Ovary (tissue), 10 donors: ENCODE measurements at regions of chr19 and their contacts with region 1.

Region 1: GRCh38 chr19:47514869-47515588 is at the start of gene NAPA:
- DNase-seq: peak; percentile 100
- H3K4me3 ChIP-seq: peak within 1 kb of the TSS; percentile 78
- H3K27ac ChIP-seq: peak within 1 kb of the TSS; percentile 85 to 97
- H3K4me1 ChIP-seq: peaks cover 34% of the 10 kb centered on the region
- H3K27me3 ChIP-seq: no peaks in the 10 kb centered on the region
- CTCF ChIP-seq: peak in 2 of 3 donors; percentile 23 to 98
- EP300 ChIP-seq: peak; percentile 92
- POLR2A ChIP-seq: peak; percentile 95
- total RNA-seq, gene NAPA: 76.5 to 101 (median 95.1) TPM

Region 2: DNA sequence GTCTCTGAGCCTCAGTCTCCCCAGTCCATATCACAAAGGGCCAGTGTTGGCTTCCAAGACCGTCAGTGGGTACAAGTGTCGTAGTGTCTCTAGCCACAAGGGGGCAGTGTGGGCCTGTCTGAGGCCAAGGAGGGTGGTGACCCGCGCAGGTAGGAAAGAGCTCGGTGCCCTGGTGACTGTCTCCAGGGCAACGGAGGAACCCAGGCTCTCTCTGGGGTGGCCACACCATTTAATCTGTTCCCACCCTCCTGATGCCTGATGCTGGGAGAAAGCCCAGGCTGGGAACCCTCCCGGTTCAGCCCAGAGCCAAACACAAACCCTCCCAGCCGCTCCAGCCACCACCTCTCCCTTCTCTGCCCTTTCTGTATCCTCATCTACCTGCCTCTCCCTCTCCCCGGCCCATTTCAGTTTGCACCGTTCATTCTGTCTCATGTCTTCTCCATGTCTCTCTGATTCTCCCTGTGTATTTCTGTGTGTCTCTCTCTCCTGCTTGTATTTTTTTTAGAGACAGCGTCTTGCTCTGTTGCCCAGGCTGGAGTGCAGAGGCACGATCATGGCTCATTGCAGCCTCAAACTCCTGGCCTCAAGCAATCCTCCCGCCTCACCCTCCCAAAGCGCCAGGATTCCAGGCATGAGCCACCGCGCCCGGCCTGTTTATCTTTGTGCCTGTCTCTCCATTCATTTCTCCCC is 78.2 kb before region 1 on chr19:
- intact Hi-C with region 1: loop called in 2 of 4 experiments (anchors 5 to 10 kb)
- DNase-seq: peak; percentile 52 to 75 (median 71)
- H3K4me3 ChIP-seq: no peak overlapping the region
- H3K27ac ChIP-seq: no peak overlapping the region
- H3K4me1 ChIP-seq: no peaks in the 10 kb centered on the region
- H3K27me3 ChIP-seq: no peaks in the 10 kb centered on the region
- CTCF ChIP-seq: peak; percentile 47 to 73 (median 68)
- EP300 ChIP-seq: no peak
- POLR2A ChIP-seq: no peak

Region 3: DNA sequence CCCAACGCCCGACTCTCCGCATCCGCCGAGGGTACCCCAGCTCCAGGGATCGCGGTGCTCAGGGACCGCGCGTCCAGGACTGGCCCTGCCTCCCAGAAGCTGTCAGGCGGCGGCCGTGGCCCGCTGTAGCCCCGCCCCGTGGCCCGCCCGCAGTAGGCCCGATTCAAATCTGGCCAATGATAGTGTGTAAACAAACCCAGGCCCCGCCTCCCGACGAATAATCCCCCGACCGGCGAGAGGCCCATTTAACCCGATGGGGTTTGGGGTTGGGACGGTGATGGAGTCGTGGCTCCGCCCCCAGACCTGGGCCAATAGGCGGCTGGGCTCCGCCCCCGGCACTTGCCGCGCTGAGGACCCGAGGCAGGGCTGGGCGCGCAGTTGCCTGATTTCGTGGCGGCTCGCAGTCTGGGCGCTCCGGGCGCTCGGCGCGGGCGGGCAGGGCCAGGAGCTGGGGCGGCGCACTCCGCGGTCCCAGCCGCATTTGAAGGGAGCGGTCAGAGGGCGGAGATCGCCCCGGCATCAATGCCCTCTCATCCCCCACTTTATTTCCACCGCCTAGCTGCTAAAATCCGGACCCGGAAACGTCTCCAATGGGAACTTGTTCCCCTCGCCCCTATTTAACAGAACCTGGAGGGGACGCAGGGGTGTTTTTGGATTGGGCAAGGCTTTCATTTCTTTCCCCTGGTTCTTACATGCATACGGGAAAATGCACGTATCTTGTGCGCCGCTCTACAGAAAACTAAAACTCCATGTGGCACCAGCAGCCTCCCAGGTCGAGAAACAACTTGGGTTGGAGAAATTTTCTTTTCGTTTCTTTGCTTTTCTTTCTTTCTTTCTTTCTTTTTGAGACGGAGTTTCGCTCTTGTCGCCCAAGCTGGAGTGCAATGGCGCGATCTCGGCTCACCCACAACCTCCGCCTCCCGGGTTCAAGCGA is 85.5 kb after region 1 on chr19:
- intact Hi-C with region 1: loop called in 2 of 4 experiments (anchors 10 kb)
- DNase-seq: peak; percentile 99 to 100 (median 99)
- H3K4me3 ChIP-seq: peak overlapping the region; percentile 55
- H3K27ac ChIP-seq: peak overlapping the region; percentile 64 to 68
- H3K4me1 ChIP-seq: peaks cover 2% of the 10 kb centered on the region
- H3K27me3 ChIP-seq: no peaks in the 10 kb centered on the region
- CTCF ChIP-seq: peak in 1 of 3 donors; percentile 6
- EP300 ChIP-seq: no peak
- POLR2A ChIP-seq: peak; percentile 68

Region 4: DNA sequence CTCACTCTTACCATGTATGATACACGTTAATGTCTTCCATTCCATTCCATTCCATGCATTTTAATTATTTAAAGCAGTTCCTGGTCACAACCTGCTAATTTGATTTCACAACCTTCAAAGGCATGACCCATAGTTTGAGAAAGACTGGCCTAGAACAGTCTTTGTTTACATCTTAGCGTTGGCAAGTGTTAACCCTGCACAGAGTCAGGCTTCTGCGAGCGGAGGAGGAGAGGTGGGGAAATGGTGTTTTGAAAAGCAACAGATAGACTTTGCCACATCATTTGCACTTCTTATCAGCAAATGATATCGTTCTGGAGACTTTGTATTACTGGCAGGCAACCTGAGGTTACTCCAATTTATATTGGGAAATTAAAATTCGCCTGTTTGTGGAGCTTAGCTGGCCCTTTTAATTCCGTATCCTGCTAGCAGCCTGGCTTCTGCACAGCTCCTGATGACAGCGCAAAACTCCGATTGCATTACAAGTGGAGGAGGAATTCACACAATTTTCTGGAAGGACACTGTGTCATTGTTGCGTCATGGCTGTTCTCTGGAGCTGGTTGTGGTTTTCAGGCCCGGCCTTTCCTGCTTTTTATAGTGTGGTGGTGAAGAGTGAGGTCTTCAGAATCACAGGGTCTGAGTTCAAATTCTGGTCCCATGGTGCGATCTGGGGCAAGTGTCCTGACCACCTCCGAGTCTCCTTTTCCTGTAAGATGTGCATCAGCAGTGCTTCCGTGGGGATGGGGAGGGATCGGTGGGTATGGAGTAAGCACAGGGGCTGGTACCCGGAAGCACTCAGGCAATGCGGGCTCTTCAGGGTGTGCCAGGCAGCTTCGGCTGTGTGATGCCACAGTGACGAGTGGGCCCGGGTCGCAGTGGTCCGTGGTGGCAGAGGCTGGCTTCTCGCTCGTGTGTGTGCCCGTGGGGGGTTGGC is 149.1 kb after region 1 on chr19:
- intact Hi-C with region 1: no loop called
- DNase-seq: peak; percentile 61 to 88 (median 73)
- H3K4me3 ChIP-seq: no peak overlapping the region
- H3K27ac ChIP-seq: peak overlapping the region; percentile 74 to 93
- H3K4me1 ChIP-seq: peaks cover 12% of the 10 kb centered on the region
- H3K27me3 ChIP-seq: no peaks in the 10 kb centered on the region
- CTCF ChIP-seq: no peak
- EP300 ChIP-seq: peak; percentile 85
- POLR2A ChIP-seq: no peak

Region 5: GRCh38 chr19:47697863-47698609 is 183.0 kb after region 1 on chr19:
- intact Hi-C with region 1: loop called in 3 of 4 experiments (anchors 10 kb)
- DNase-seq: peak; percentile 68 to 84 (median 81)
- H3K4me3 ChIP-seq: no peak overlapping the region
- H3K27ac ChIP-seq: no peak overlapping the region
- H3K4me1 ChIP-seq: no peaks in the 10 kb centered on the region
- H3K27me3 ChIP-seq: no peaks in the 10 kb centered on the region
- CTCF ChIP-seq: peak; percentile 92 to 96 (median 95)
- EP300 ChIP-seq: no peak
- POLR2A ChIP-seq: peak; percentile 15

Region 6: GRCh38 chr19:47707135-47707925 is 192.3 kb after region 1 on chr19:
- intact Hi-C with region 1: loop called in 1 of 4 experiments (anchors 10 kb)
- DNase-seq: peak in 4 of 5 donors; percentile 57 to 77 (median 74)
- H3K4me3 ChIP-seq: no peak overlapping the region
- H3K27ac ChIP-seq: no peak overlapping the region
- H3K4me1 ChIP-seq: peaks cover 3% of the 10 kb centered on the region
- H3K27me3 ChIP-seq: no peaks in the 10 kb centered on the region
- CTCF ChIP-seq: peak; percentile 11 to 79 (median 65)
- EP300 ChIP-seq: no peak
- POLR2A ChIP-seq: no peak

Region 7: GRCh38 chr19:47778089-47778953 is 263.3 kb after region 1 on chr19 and contains the start of gene SELENOW:
- intact Hi-C with region 1: loop called in 2 of 4 experiments (anchors 10 kb)
- DNase-seq: peak; percentile 80 to 88 (median 87)
- H3K4me3 ChIP-seq: peak within 1 kb of the TSS; percentile 94
- H3K27ac ChIP-seq: peak within 1 kb of the TSS; percentile 88 to 98
- H3K4me1 ChIP-seq: peaks cover 13% of the 10 kb centered on the region
- H3K27me3 ChIP-seq: no peaks in the 10 kb centered on the region
- CTCF ChIP-seq: peak in 1 of 3 donors; percentile 37
- EP300 ChIP-seq: no peak
- POLR2A ChIP-seq: peak; percentile 92
- total RNA-seq, gene SELENOW: 169 to 412 (median 211) TPM